Esophagus muscularis mucosa (tissue), 4 donors: ENCODE measurements at regions of chr7 and their contacts with region 1.

Region 1: DNA sequence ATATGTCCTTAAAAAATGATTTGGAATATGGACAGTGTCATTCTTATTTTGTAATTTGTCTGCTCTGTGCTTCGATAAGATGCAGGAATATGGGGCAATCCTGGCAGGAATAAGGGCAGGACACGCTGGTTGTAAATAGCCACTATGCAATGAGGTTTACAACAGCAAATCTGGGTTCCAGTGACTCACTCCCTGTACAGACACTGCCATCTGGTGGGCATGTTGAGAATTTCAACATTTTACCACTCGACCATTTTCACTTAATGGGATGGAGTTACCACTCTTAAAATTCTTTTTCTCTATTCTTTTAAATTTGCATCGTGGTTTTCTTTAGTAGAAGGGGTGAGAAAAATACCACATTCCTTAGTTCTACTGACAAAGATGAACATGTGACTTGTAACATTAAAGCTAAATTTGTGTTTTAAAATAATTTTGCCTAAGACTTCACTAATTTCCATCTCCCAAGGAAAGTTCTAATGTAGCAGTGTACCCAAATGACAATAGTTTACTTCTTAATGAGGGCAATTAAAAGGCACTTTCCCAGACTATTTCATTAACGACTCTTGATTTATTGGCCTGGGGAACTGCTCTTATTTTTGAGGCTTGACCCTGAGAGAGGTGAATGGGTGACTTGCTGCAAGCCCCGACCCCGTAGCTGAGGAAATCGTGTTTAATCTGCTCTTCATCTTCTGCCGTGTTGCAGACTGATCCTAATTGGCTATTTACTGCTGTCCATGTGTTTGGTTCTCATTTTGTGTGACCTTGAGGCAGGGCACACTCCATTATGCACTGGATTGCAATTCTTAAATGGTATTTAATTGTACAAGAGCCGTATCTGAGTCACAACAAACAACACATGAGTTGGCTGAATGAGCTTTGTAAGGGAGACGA is 173.6 kb upstream of the IMMP2L start:
- DNase-seq: no peak
- H3K4me3 ChIP-seq: no peak overlapping the region
- H3K27ac ChIP-seq: no peak overlapping the region
- H3K4me1 ChIP-seq: peaks cover 0 to 5% (median 2%) of the 10 kb centered on the region in 4 donors
- H3K27me3 ChIP-seq: no peaks in the 10 kb centered on the region
- CTCF ChIP-seq: peak; percentile 71 to 88 (median 86)
- EP300 ChIP-seq: no peak
- POLR2A ChIP-seq: no peak

Region 2: DNA sequence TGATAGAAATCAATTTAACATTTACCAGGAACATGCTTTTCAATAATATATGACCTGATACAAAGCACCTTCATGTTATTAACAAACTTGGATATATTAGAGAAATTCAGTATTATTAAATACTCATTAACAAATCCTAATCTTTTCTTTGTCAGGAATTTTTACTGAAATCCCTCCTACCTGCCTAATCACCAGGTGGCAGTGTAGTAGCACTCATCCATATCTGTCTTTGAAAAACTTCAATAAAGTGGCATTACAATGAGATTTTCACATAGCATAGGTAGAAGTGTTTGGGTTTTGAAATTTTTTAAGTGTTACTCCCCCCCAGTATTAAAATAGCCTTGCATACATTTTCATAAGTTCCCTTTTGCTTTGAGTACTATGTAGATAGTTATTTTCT is 1891.5 kb before region 1 on chr7:
- intact Hi-C with region 1: loop called (anchors 10 kb)
- DNase-seq: no peak
- H3K4me3 ChIP-seq: no peak overlapping the region
- H3K27ac ChIP-seq: no peak overlapping the region
- H3K4me1 ChIP-seq: no peaks in the 10 kb centered on the region
- H3K27me3 ChIP-seq: no peaks in the 10 kb centered on the region
- CTCF ChIP-seq: peak in 2 of 3 experiments; percentile 15 to 36
- EP300 ChIP-seq: no peak
- POLR2A ChIP-seq: no peak

Region 3: GRCh38 chr7:111089822-111090426 is 646.0 kb before region 1 on chr7:
- intact Hi-C with region 1: loop called (anchors 10 kb)
- DNase-seq: no peak
- H3K4me3 ChIP-seq: no peak overlapping the region
- H3K27ac ChIP-seq: no peak overlapping the region
- H3K4me1 ChIP-seq: peaks cover 6 to 38% (median 33%) of the 10 kb centered on the region in 4 donors
- H3K27me3 ChIP-seq: no peaks in the 10 kb centered on the region
- CTCF ChIP-seq: peak; percentile 49 to 83 (median 78)
- EP300 ChIP-seq: no peak
- POLR2A ChIP-seq: no peak